Activated CD8-positive, alpha-beta T cell treated with anti-CD3 and anti-CD28 coated beads, Interleukin-2, amount 10 ng/mL, durations not matched to agents 7 days and 5 days (primary cell): ENCODE measurements at regions of chr10 and their contacts with region 1.

Region 1: GRCh38 chr10:6580279-6581029 is 378 bp upstream of the PRKCQ start:
- DNase-seq: peak; percentile 88
- ATAC-seq: peak; percentile 65
- H3K4me3 Mint-ChIP-seq: peak overlapping the region; percentile 93
- H3K27ac Mint-ChIP-seq: peak overlapping the region; percentile 97
- H3K4me1 Mint-ChIP-seq: peaks cover 41% of the 10 kb centered on the region
- H3K27me3 Mint-ChIP-seq: no peaks in the 10 kb centered on the region

Region 2: GRCh38 chr10:6144406-6145165 is 435.9 kb before region 1 on chr10:
- CTCF ChIA-PET with region 1: no interaction called
- POLR2A ChIA-PET with region 1: no interaction called
- DNase-seq: peak; percentile 92
- ATAC-seq: peak; percentile 91
- H3K4me3 Mint-ChIP-seq: peak overlapping the region; percentile 79
- H3K27ac Mint-ChIP-seq: peak overlapping the region; percentile 85
- H3K4me1 Mint-ChIP-seq: peaks cover 79% of the 10 kb centered on the region
- H3K27me3 Mint-ChIP-seq: no peaks in the 10 kb centered on the region

Region 3: GRCh38 chr10:6473901-6474370 is 106.5 kb before region 1 on chr10:
- CTCF ChIA-PET with region 1: interaction called, 21 read pairs
- POLR2A ChIA-PET with region 1: interaction called, 21 read pairs
- DNase-seq: peak; percentile 59
- ATAC-seq: peak; percentile 86
- H3K4me3 Mint-ChIP-seq: peak overlapping the region; percentile 90
- H3K27ac Mint-ChIP-seq: peak overlapping the region; percentile 99
- H3K4me1 Mint-ChIP-seq: peaks cover 64% of the 10 kb centered on the region
- H3K27me3 Mint-ChIP-seq: no peaks in the 10 kb centered on the region

Region 4: GRCh38 chr10:6542999-6543430 is 37.4 kb before region 1 on chr10:
- CTCF ChIA-PET with region 1: interaction called, 31 read pairs
- POLR2A ChIA-PET with region 1: interaction called, 106 read pairs
- DNase-seq: peak; percentile 77
- ATAC-seq: peak; percentile 87
- H3K4me3 Mint-ChIP-seq: peak overlapping the region; percentile 83
- H3K27ac Mint-ChIP-seq: peak overlapping the region; percentile 99
- H3K4me1 Mint-ChIP-seq: peaks cover 77% of the 10 kb centered on the region
- H3K27me3 Mint-ChIP-seq: no peaks in the 10 kb centered on the region

Region 5: DNA sequence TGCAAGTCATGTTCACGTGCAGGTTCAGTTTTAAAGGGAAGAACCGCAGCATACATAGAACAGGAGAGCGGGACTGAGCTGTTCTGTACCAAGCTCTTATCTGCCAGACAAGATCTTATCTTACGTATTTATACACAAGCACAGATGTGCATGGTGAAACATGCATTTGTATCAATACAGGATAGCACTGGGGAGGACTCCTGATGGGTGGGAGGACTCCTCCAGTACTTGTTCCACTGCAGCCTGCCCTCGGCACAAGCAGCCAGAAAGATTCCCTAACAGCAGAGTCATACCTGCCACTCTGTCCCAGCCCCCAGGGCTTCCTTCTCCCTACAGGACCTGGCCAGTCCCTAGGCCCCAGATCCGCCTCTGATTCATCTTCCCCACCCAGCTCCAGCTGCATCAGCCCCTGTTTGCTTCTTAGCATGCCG is 12.8 kb after region 1 on chr10:
- CTCF ChIA-PET with region 1: interaction called, 131 read pairs
- POLR2A ChIA-PET with region 1: interaction called, 239 read pairs
- DNase-seq: no peak
- ATAC-seq: peak; percentile 45
- H3K4me3 Mint-ChIP-seq: peak overlapping the region; percentile 25
- H3K27ac Mint-ChIP-seq: peak overlapping the region; percentile 96
- H3K4me1 Mint-ChIP-seq: peaks cover 93% of the 10 kb centered on the region
- H3K27me3 Mint-ChIP-seq: no peaks in the 10 kb centered on the region

Region 6: DNA sequence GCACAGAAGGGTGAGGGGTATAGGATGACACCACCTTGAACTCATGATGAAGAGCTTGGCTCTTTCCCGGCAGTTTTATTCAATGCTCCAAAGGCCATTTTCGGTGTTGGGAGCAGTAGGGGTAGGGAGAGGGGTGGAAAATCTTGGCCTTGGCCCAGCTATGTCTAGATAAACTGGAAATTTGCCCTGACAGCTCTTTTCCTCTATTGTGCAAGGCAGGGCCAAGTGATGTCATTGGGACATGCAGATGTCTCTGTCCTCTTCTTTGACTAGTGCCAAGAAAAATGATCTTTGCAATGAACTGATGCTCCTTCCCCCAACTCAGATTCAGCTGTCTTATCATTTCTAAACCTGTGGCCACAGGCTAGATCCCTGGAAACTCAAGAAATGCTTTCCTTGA is 27.3 kb after region 1 on chr10:
- CTCF ChIA-PET with region 1: interaction called, 63 read pairs
- POLR2A ChIA-PET with region 1: interaction called, 239 read pairs
- DNase-seq: no peak
- ATAC-seq: no peak
- H3K4me3 Mint-ChIP-seq: no peak overlapping the region
- H3K27ac Mint-ChIP-seq: peak overlapping the region; percentile 87
- H3K4me1 Mint-ChIP-seq: peaks cover 78% of the 10 kb centered on the region
- H3K27me3 Mint-ChIP-seq: no peaks in the 10 kb centered on the region

Region 7: DNA sequence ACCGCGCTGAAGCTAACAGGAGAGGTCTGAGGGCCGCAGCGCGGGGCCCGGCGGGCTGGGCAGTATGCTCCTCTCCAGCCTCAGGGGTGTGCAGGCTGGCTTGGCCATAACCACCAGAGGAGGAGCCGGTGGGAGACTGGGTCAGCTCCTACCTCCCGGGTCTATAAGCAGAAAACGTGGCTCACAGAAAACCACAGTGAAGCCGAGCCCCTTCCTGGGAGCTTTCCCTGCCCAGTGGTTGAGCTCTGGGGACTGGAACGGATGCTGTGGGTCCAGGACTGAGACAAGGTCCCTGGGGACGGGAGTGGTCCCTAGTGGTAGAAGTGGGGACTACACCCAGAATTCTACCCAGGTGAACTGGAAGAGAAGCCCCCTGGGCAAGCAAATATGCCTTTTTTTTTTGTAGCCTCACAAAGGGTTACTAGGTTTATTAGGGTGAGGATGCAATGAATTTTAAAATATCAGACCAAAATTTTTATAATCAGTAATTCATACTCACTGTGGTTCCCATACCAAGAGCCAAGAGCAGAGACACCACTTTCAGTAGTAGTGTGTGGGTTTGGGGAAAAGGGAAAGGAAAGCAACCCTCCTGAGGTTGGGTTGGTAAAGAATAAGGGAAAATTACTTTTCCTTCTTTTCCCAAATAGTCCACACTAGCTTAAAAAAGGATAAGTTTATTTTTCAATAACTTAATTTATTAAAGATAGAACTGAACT is 67.5 kb after region 1 on chr10:
- CTCF ChIA-PET with region 1: interaction called, 39 read pairs
- POLR2A ChIA-PET with region 1: interaction called, 21 read pairs
- DNase-seq: peak; percentile 84
- ATAC-seq: peak; percentile 88
- H3K4me3 Mint-ChIP-seq: no peak overlapping the region
- H3K27ac Mint-ChIP-seq: peak overlapping the region; percentile 46
- H3K4me1 Mint-ChIP-seq: peaks cover 48% of the 10 kb centered on the region
- H3K27me3 Mint-ChIP-seq: peaks cover 5% of the 10 kb centered on the region

Region 8: DNA sequence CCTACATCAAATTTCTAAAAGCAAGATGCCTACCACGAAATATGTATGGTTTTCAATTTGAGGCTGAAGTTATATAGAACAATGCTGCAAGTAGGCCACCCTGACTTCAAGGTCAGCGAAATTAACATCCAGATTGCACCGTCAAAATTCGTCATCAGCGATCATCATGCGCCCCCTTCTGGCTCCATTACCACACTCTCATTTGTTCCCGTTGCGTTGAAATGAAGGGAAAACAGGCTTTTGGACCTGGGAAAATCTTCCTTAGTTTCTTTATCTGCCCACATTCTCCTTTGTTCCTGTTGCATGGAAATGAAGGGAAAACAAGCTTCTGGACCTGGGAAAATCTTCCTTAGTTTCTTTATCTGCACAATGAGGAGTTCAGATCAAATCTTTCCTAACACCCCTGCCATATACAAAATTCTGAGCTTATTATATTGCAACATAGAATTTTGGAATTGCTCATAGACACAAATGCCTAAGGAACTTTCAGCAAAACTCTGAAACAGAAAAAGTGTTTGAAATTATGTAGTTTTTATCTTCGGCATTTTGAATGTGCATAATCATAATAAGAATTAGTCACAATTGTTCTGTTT is 97.9 kb after region 1 on chr10:
- CTCF ChIA-PET with region 1: interaction called, 13 read pairs
- POLR2A ChIA-PET with region 1: no interaction called
- DNase-seq: peak; percentile 76
- ATAC-seq: peak; percentile 68
- H3K4me3 Mint-ChIP-seq: no peak overlapping the region
- H3K27ac Mint-ChIP-seq: no peak overlapping the region
- H3K4me1 Mint-ChIP-seq: peaks cover 10% of the 10 kb centered on the region
- H3K27me3 Mint-ChIP-seq: peaks cover 52% of the 10 kb centered on the region

Region 9: DNA sequence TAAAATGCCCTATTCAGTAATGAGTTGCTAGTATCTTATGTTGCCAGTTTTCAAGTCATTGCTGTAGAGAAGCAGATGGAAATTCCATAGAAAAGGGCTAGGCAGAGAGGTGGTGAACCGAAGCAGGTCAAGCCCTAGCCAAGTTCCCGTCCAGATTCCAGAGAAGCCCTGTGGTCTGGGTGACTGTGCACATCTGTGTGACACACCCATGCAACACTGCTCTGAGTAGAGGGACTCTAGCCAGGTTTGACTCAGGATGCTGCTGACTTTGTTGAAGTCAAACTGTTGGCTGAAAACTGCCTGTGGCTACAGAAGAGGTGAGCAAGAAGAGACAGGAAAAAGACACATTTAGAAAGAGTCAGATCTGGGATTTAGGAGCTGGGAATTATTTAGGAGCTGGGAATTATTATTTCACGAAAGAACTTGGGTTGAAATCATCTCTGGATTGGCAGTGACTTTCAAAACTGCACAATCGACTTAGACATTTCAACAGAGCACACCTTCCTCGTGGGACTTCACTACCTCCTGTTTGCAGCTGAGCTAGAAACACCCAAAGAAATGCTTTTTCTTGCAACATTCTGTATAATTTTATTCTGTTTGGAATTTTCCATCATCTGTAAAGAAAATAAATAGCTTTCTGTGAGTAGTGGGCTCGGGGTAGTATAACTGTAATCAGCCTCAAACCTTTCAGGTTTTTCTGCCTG is 148.8 kb after region 1 on chr10:
- CTCF ChIA-PET with region 1: no interaction called
- POLR2A ChIA-PET with region 1: no interaction called
- DNase-seq: no peak
- ATAC-seq: no peak
- H3K4me3 Mint-ChIP-seq: no peak overlapping the region
- H3K27ac Mint-ChIP-seq: no peak overlapping the region
- H3K4me1 Mint-ChIP-seq: no peaks in the 10 kb centered on the region
- H3K27me3 Mint-ChIP-seq: peaks cover 50% of the 10 kb centered on the region